Posterior vena cava (tissue), 2 donors: ENCODE measurements at regions of chr3 and their contacts with region 1.

Region 1: GRCh38 chr3:112467539-112467938 is 31.7 kb downstream of the BTLA start:
- DNase-seq: no peak

Region 2: GRCh38 chr3:112416391-112417212 is 50.9 kb before region 1 on chr3:
- intact Hi-C with region 1: loop called in 1 of 2 experiments (anchors 5 kb)
- DNase-seq: no peak